Naive thymus-derived CD4-positive, alpha-beta T cell (primary cell): ENCODE measurements at regions of chr12 and their contacts with region 1.

Region 1: GRCh38 chr12:122871851-122872780 is 23.8 kb downstream of the VPS37B start:
- DNase-seq: peak in 5 of 9 donors; percentile 40 to 71 (median 43)
- ATAC-seq: peak; percentile 61
- H3K4me3 ChIP-seq: peak overlapping the region; percentile 50
- H3K4me3 Mint-ChIP-seq: peak overlapping the region; percentile 82 to 96 (median 89)
- H3K27ac ChIP-seq: peak overlapping the region; percentile 64
- H3K27ac Mint-ChIP-seq: peak overlapping the region; percentile 78 to 97 (median 87)
- H3K4me1 ChIP-seq: peaks cover 31 to 51% of the 10 kb centered on the region in 2 donors
- H3K4me1 Mint-ChIP-seq: peaks cover 47 to 82% (median 68%) of the 10 kb centered on the region in 7 donors
- H3K27me3 ChIP-seq: no peaks in the 10 kb centered on the region
- H3K27me3 Mint-ChIP-seq: peaks cover 0 to 9% (median 0%) of the 10 kb centered on the region in 5 donors

Region 2: DNA sequence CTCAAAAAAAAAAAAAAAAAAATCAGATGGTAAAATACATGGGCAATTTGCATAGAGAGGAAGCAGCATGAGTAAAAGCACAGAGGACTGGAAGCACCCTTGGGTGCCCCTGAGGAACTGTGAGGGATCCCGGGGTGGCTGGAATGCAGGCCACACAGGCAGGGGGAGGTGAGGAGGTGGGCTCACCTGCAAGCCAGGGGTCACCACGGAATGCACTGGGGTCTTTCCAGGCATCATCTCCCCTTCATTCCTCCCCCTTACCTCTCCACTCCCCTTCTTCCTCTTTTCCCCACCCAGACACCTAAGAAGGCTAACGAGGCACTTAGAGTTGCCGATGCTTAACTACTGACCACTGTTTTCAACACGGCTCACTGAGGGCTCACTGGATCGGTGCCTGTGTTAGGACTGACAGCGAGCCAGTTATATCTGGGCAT is 51.3 kb before region 1 on chr12:
- CTCF ChIA-PET with region 1: no interaction called
- POLR2A ChIA-PET with region 1: no interaction called
- intact Hi-C with region 1: no loop called
- DNase-seq: no peak
- ATAC-seq: no peak
- H3K4me3 ChIP-seq: no peak overlapping the region
- H3K4me3 Mint-ChIP-seq: no peak overlapping the region
- H3K27ac ChIP-seq: no peak overlapping the region
- H3K27ac Mint-ChIP-seq: no peak overlapping the region
- H3K4me1 ChIP-seq: no peaks in the 10 kb centered on the region
- H3K4me1 Mint-ChIP-seq: no peaks in the 10 kb centered on the region
- H3K27me3 ChIP-seq: no peaks in the 10 kb centered on the region
- H3K27me3 Mint-ChIP-seq: peaks cover 0 to under 1% (median 0%) of the 10 kb centered on the region in 5 donors

Region 3: DNA sequence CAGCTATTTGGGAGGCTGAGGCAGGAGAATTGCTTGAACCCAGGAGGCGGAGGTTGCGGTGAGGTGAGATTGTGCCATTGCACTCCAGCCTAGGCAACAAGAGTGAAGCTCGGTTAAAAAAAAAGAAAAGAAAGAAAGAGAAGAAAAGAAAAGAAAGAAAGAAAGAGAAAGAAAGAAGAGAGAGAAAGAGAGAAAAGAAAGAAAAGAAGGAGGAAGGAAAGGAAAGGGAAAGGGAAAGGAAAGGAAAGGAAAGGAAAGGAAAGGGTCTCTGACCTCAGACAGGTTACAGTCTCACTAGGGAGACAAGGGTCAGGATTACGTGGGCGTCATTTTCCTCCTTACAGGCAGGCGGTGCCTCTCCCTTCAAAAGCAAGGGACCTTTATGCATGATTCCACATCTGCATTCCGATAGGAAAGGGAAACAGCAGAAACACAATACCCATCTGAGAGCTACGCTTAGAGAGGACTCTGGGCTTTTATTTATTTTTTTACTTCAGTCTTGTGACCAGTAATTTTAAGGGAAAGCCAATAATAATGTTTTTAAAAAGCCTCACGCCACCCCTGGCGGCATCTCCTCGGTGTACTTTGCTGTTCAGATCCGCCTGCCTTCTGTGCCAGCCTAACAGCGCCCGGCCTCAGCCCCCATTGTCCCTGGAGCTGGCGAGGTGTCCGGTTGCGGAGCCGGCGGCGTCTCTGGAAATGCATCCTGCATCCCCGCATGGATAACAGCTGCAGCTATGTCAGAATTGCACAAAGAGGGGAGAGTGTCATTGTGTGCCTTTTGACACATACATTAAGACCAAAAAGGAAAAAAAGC is 37.8 kb before region 1 on chr12:
- CTCF ChIA-PET with region 1: no interaction called
- POLR2A ChIA-PET with region 1: interaction called, 9 read pairs
- intact Hi-C with region 1: loop called in 1 of 2 experiments (anchors 5 kb)
- DNase-seq: peak in 2 of 9 donors; percentile 27 to 33
- ATAC-seq: peak; percentile 30
- H3K4me3 ChIP-seq: peak overlapping the region; percentile 55
- H3K4me3 Mint-ChIP-seq: peak overlapping the region; percentile 85 to 99 (median 92)
- H3K27ac ChIP-seq: peak overlapping the region; percentile 50
- H3K27ac Mint-ChIP-seq: peak overlapping the region; percentile 87 to 98 (median 95)
- H3K4me1 ChIP-seq: peaks cover 0 to 13% of the 10 kb centered on the region in 2 donors
- H3K4me1 Mint-ChIP-seq: peaks cover 30 to 48% (median 44%) of the 10 kb centered on the region in 7 donors
- H3K27me3 ChIP-seq: no peaks in the 10 kb centered on the region
- H3K27me3 Mint-ChIP-seq: peaks cover 0 to 29% (median 0%) of the 10 kb centered on the region in 5 donors

Region 4: DNA sequence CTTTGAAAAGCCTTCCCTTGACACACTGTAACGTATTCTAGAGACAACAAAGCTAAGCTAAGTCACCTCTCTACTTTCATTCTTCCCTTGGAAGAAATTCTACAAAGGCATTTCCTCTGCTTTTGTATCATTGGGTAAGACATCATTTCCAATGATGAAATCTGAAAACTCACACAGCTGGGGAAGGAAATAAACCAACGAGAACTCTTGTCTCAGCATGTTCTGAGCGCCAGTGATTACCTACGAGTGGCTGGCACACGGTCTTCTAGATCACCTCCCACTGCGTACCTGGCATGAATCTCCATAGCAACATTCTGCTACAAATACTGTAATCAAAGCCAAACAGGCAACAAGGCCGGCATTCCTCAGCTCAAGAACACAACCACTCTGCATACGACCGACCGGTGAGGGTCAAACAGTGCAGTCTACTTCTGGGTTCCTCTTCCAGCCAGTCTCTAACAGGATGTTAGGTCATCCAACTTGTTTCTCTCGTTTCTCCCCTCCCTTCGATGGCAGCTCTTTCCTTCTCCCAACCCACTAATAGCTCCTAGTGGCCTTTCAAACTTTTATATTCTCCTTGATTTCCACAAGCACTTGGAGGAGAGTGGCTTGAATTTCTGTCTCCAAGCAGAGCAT is 16.2 kb after region 1 on chr12:
- CTCF ChIA-PET with region 1: interaction called, 5 read pairs
- POLR2A ChIA-PET with region 1: interaction called, 16 read pairs
- intact Hi-C with region 1: loop called (anchors 1 to 2 kb)
- DNase-seq: peak in 7 of 9 donors; percentile 65 to 90 (median 82)
- ATAC-seq: peak; percentile 93
- H3K4me3 ChIP-seq: peak overlapping the region; percentile 47
- H3K4me3 Mint-ChIP-seq: peak overlapping the region; percentile 75 to 89 (median 84)
- H3K27ac ChIP-seq: peak overlapping the region; percentile 86
- H3K27ac Mint-ChIP-seq: peak overlapping the region; percentile 92 to 98 (median 93)
- H3K4me1 ChIP-seq: peaks cover 59 to 68% of the 10 kb centered on the region in 2 donors
- H3K4me1 Mint-ChIP-seq: peaks cover 68 to 94% (median 89%) of the 10 kb centered on the region in 7 donors
- H3K27me3 ChIP-seq: no peaks in the 10 kb centered on the region
- H3K27me3 Mint-ChIP-seq: peaks cover 0 to 3% (median 0%) of the 10 kb centered on the region in 5 donors